ENCODE measurements at regions of chr1 and their contacts with region 1.

Region 1: DNA sequence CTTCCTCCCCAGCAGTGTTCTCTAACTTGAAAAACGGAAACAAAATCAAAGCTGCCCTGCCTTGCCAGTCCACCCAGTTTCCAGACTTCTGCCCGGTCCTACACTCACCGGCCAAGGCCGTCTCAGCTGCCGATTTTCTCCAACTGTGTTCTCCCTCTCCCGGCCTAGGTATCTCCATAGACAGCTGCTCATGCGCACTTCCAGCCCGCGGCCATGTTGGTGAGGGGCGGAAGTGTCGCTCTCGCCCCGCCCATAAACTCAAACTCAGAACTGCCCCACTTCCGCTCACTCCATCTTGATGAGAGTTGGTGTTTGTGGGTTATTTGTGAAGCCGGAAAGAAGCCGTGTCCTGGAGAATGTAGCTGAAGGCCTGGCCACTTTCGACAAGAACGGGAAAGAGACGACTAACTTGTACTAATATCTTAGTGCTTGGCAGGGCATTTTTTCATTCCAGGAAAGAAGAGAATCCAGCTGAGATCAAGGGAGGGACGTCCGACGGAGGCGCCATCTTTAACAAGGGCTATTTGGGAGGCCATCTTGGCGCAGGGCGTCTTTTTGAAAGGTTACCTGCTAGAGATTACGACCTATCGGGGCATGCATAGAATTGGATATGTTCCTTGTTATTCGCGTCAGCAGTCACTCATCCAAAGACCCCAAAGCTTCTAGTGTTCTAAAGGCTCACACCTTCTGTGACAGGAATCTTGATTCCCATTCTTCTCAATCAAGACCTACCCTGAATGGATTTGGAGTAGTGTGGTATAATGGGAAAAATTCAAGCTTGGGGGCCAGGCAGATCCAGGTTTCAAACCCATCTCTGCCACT is at the start of gene USF1:
- DNase-seq: peak; percentile 96
- ATAC-seq: peak; percentile 86
- H3K4me3 Mint-ChIP-seq: peak within 1 kb of the TSS; percentile 81
- H3K27ac Mint-ChIP-seq: peak within 1 kb of the TSS; percentile 99
- H3K4me1 Mint-ChIP-seq: peaks cover 32% of the 10 kb centered on the region
- H3K27me3 Mint-ChIP-seq: no peaks in the 10 kb centered on the region
- total RNA-seq, gene USF1: 34.5 to 42.8 TPM

Region 2: GRCh38 chr1:161021165-161021960 is 24.6 kb before region 1 on chr1:
- CTCF ChIA-PET with region 1: interaction called, 11 read pairs
- POLR2A ChIA-PET with region 1: interaction called, 8 read pairs
- intact Hi-C with region 1: loop called in 1 of 2 experiments (anchors 1 kb)
- DNase-seq: peak; percentile 94
- ATAC-seq: peak; percentile 92
- H3K4me3 Mint-ChIP-seq: peak overlapping the region; percentile 87
- H3K27ac Mint-ChIP-seq: peak overlapping the region; percentile 86
- H3K4me1 Mint-ChIP-seq: peaks cover 33% of the 10 kb centered on the region
- H3K27me3 Mint-ChIP-seq: no peaks in the 10 kb centered on the region

Region 3: GRCh38 chr1:161061419-161061818 is 15.5 kb after region 1 on chr1:
- CTCF ChIA-PET with region 1: interaction called, 11 read pairs
- POLR2A ChIA-PET with region 1: interaction called, 10 read pairs
- intact Hi-C with region 1: loop called in 1 of 2 experiments (anchors 1 kb)
- DNase-seq: no peak
- ATAC-seq: no peak
- H3K4me3 Mint-ChIP-seq: no peak overlapping the region
- H3K27ac Mint-ChIP-seq: no peak overlapping the region
- H3K4me1 Mint-ChIP-seq: peaks cover 61% of the 10 kb centered on the region
- H3K27me3 Mint-ChIP-seq: no peaks in the 10 kb centered on the region

Region 4: GRCh38 chr1:161117759-161118581 is 72.0 kb after region 1 on chr1 and contains the starts of genes NIT1 and PFDN2:
- CTCF ChIA-PET with region 1: interaction called, 4 read pairs
- POLR2A ChIA-PET with region 1: no interaction called
- intact Hi-C with region 1: loop called in 1 of 2 experiments (anchors 1 kb)
- DNase-seq: peak; percentile 94
- ATAC-seq: peak; percentile 53
- H3K4me3 Mint-ChIP-seq: peak within 1 kb of the TSS; percentile 94
- H3K27ac Mint-ChIP-seq: peak within 1 kb of the TSS; percentile 98
- H3K4me1 Mint-ChIP-seq: peaks cover 75% of the 10 kb centered on the region
- H3K27me3 Mint-ChIP-seq: no peaks in the 10 kb centered on the region
- total RNA-seq, gene NIT1: 58.2 to 62.1 TPM
- total RNA-seq, gene PFDN2: 108 to 136 TPM

Region 5: DNA sequence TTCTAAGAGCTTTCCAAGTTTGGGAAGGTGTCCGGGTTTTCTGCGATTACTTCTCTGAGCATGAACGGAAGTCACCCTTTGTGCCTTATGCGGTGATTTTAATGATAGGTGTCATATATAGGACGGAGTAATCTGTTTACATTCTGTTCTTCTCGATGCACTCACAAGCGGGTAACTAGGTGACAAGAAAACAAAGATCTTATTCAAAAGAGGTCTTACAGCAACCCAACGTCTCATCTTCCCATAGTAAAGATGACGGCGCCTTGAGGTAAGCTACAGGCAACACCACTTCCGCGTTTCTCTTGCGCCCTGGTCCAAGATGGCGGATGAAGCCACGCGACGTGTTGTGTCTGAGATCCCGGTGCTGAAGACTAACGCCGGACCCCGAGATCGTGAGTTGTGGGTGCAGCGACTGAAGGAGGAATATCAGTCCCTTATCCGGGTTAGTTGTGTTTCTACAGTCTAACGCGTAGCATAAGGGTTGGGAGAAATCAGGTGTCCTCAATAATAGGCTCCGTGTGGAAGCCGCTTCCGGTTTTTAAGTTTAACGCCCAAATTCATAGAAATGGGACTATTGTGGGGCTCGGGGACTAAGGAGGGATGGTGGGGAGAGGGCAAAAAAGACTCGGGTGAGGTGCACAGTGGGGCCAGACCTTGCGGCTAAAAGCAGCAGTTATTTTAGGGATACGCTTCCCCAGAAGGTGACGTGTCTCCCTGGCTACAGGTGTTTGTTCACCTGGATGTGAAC is 107.9 kb after region 1 on chr1 and contains the start of gene UFC1:
- CTCF ChIA-PET with region 1: no interaction called
- POLR2A ChIA-PET with region 1: no interaction called
- intact Hi-C with region 1: loop called (anchors 1 to 5 kb)
- DNase-seq: peak; percentile 89
- ATAC-seq: peak; percentile 98
- H3K4me3 Mint-ChIP-seq: peak within 1 kb of the TSS; percentile 94
- H3K27ac Mint-ChIP-seq: peak within 1 kb of the TSS; percentile 99
- H3K4me1 Mint-ChIP-seq: peaks cover 20% of the 10 kb centered on the region
- H3K27me3 Mint-ChIP-seq: no peaks in the 10 kb centered on the region
- total RNA-seq, gene UFC1: 89.2 to 98.6 TPM

Region 6: GRCh38 chr1:161159087-161159912 is 113.3 kb after region 1 on chr1 and contains the start of gene USP21:
- CTCF ChIA-PET with region 1: no interaction called
- POLR2A ChIA-PET with region 1: no interaction called
- intact Hi-C with region 1: loop called (anchors 1 to 5 kb)
- DNase-seq: peak; percentile 95
- ATAC-seq: peak; percentile 96
- H3K4me3 Mint-ChIP-seq: peak within 1 kb of the TSS; percentile 79
- H3K27ac Mint-ChIP-seq: peak within 1 kb of the TSS; percentile 82
- H3K4me1 Mint-ChIP-seq: peaks cover 50% of the 10 kb centered on the region
- H3K27me3 Mint-ChIP-seq: no peaks in the 10 kb centered on the region
- total RNA-seq, gene USP21: 25.1 to 32.0 TPM

Region 7: DNA sequence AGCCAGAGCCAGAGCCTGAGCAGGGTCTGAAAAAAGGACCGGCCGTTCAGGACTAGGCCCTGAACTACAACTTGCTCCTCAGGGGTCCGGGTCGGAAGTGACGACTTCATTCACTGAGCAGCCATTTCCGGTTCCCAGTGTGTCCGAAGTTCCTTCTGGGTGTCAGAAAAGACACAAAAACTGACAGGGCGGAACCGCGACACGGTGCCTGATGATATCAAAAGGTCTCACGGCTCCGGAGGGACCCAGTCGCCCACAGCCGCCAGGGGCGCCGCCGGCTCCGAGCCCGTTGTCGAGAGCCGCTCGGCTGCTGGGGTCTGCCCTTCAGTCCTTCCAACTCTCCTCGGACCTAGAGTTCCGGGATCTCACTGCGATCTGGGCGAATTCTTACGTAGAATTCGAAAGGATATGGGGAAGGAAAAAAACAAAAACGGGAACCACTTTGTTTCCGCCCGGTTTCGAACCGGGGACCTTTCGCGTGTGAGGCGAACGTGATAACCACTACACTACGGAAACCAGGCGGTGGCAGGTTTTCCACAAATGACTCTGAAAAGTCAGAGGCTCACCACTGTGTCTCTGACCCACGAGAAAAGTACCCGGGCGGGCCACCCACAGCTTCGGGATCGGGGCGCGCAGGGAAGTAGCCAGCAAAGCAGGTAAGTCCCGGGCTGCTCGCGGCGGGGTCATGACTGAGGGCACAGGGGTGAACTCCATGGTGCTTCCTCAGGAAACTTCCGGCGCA is 353.5 kb after region 1 on chr1:
- CTCF ChIA-PET with region 1: no interaction called
- POLR2A ChIA-PET with region 1: no interaction called
- intact Hi-C with region 1: loop called in 1 of 2 experiments (anchors 5 kb)
- DNase-seq: peak; percentile 92
- ATAC-seq: peak; percentile 83
- H3K4me3 Mint-ChIP-seq: peak overlapping the region; percentile 89
- H3K27ac Mint-ChIP-seq: peak overlapping the region; percentile 100
- H3K4me1 Mint-ChIP-seq: peaks cover 34% of the 10 kb centered on the region
- H3K27me3 Mint-ChIP-seq: peaks cover 9% of the 10 kb centered on the region

Measured in activated CD4-positive, alpha-beta T cell treated with anti-CD3 and anti-CD28 coated beads for 36 hours (primary cell).